Activated CD8-positive, alpha-beta memory T cell treated with anti-CD3 and anti-CD28 coated beads, Interleukin-2, amount 10 ng/mL, durations not matched to agents 7 days and 5 days (primary cell): ENCODE measurements at regions of chr4 and their contacts with region 1.

Region 1: DNA sequence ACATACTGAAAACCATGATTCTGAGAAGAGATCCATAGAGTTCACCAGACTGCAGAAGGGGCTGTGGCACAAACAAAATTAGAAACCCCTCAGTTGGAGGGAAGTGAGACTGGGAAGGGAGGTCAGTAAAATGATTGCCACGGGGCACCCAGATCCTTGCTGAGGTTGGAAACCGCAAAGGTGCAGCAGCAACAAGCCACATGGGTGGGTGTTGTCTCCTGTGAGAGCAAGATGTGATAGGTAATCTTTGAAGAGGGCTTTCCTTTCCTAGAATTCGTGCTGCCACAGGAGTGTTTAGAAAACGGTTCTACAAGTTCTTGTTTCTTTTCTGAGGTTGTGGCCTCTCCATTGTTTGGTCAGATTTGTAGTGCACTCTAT is 85.5 kb downstream of the NFKB1 start:
- DNase-seq: peak; percentile 89
- ATAC-seq: peak; percentile 71
- H3K4me3 Mint-ChIP-seq: peak overlapping the region; percentile 41
- H3K27ac Mint-ChIP-seq: peak overlapping the region; percentile 83
- H3K4me1 Mint-ChIP-seq: peaks cover 84% of the 10 kb centered on the region
- H3K27me3 Mint-ChIP-seq: no peaks in the 10 kb centered on the region

Region 2: DNA sequence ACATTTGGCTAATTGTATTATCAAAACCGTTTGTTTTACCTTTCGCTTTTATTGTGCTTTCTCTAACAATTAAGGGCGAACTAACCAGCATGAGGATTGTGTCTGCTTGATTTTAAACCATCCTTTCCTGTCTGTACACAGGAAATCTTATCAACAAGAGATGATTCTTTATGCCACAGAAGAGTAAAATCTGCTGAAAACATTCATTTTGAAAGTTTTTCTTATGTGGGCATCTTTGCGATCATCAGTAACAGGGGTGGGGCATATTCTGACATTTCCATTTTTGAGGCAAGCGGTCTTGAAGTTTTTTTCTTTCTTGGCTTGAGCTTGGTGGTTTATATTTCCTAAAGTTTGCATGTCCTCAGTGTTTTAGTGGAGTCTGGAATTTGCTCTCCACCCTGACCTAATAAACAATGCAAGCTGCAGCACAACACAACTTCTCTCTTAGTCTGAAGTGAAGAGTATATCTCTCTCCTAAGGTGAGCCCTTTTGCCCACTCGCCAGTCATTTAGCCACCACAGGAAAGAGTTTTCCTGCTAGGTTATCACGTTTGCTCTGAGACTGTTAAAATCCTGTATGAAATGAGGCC is 58.8 kb before region 1 on chr4:
- CTCF ChIA-PET with region 1: interaction called, 11 read pairs
- DNase-seq: peak; percentile 58
- ATAC-seq: peak; percentile 86
- H3K4me3 Mint-ChIP-seq: peak overlapping the region; percentile 73
- H3K27ac Mint-ChIP-seq: peak overlapping the region; percentile 85
- H3K4me1 Mint-ChIP-seq: peaks cover 67% of the 10 kb centered on the region
- H3K27me3 Mint-ChIP-seq: no peaks in the 10 kb centered on the region